Stomach (tissue), 19 donors: ENCODE measurements at regions of chr1 and their contacts with region 1.

Region 1: GRCh38 chr1:11838349-11839272 is 9.0 kb downstream of the NPPA start:
- DNase-seq: peak; percentile 75 to 86
- H3K4me3 ChIP-seq: no peak overlapping the region
- H3K27ac ChIP-seq: no peak overlapping the region
- H3K4me1 ChIP-seq: peaks cover 0 to 25% (median 0%) of the 10 kb centered on the region in 4 donors
- H3K27me3 ChIP-seq: no peaks in the 10 kb centered on the region
- CTCF ChIP-seq: peak in 5 of 7 experiments; percentile 91 to 92 (median 92)
- EP300 ChIP-seq: no peak
- POLR2A ChIP-seq: no peak

Region 2: GRCh38 chr1:11784993-11785769 is 53.4 kb before region 1 on chr1:
- intact Hi-C with region 1: no loop called
- DNase-seq: peak; percentile 81
- H3K4me3 ChIP-seq: peak overlapping the region; percentile 18 to 35 (median 24)
- H3K27ac ChIP-seq: peak overlapping the region in 3 of 5 donors; percentile 49 to 67 (median 57)
- H3K4me1 ChIP-seq: peaks cover 47 to 60% (median 57%) of the 10 kb centered on the region in 4 donors
- H3K27me3 ChIP-seq: no peaks in the 10 kb centered on the region
- CTCF ChIP-seq: peak in 5 of 7 experiments; percentile 71 to 91 (median 75)
- EP300 ChIP-seq: no peak
- POLR2A ChIP-seq: no peak

Region 3: GRCh38 chr1:11893907-11894251 is 55.3 kb after region 1 on chr1:
- intact Hi-C with region 1: loop called (anchors 5 kb)
- DNase-seq: peak; percentile 72 to 81
- H3K4me3 ChIP-seq: no peak overlapping the region
- H3K27ac ChIP-seq: no peak overlapping the region
- H3K4me1 ChIP-seq: peaks cover 0 to 9% (median 0%) of the 10 kb centered on the region in 4 donors
- H3K27me3 ChIP-seq: peaks cover 0 to 68% (median 10%) of the 10 kb centered on the region in 3 donors
- CTCF ChIP-seq: peak in 5 of 7 experiments; percentile 80 to 88 (median 85)
- EP300 ChIP-seq: no peak
- POLR2A ChIP-seq: no peak

Region 4: DNA sequence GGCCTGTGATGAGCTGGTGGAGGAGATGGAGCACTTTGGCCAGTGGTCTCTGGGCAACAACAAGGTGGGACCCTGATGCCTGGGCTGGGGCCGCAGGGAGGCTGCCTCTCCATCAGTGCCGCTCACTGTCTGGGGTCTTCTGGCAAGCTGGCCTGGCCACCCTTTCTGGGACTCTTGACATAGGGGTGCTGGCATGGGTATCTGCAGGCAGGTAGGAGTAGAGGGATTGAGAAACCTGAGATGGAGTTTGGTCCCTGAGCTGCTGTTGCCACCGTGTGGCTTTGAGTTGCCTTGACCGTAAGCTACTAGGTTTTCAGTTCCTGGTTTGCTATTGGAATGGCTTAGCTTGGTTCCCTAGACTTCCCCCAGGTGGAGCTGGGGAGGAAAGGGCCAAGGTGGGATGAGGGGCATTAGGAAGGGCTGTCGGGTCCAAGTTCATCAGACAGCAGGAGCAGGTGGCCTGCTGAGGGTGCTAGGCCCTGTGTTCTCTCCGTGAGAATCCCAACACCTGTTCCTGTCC is 128.5 kb after region 1 on chr1:
- intact Hi-C with region 1: loop called (anchors 10 kb)
- DNase-seq: peak; percentile 44 to 88
- H3K4me3 ChIP-seq: no peak overlapping the region
- H3K27ac ChIP-seq: no peak overlapping the region
- H3K4me1 ChIP-seq: peaks cover 0 to 4% (median 0%) of the 10 kb centered on the region in 4 donors
- H3K27me3 ChIP-seq: no peaks in the 10 kb centered on the region
- CTCF ChIP-seq: peak in 5 of 7 experiments; percentile 16 to 66 (median 41)
- EP300 ChIP-seq: no peak
- POLR2A ChIP-seq: no peak